Prostate gland (tissue), 2 donors: ENCODE measurements at regions of chr1 and their contacts with region 1.

Region 1: GRCh38 chr1:171081314-171081753 is 9.4 kb upstream of the FMO3 start:
- DNase-seq: no peak
- H3K4me3 ChIP-seq: no peak overlapping the region
- H3K27ac ChIP-seq: peak overlapping the region; percentile 29 to 51
- H3K4me1 ChIP-seq: no peaks in the 10 kb centered on the region
- H3K27me3 ChIP-seq: no peaks in the 10 kb centered on the region
- CTCF ChIP-seq: peak; percentile 29 to 75 (median 64)
- POLR2A ChIP-seq: no peak

Region 2: DNA sequence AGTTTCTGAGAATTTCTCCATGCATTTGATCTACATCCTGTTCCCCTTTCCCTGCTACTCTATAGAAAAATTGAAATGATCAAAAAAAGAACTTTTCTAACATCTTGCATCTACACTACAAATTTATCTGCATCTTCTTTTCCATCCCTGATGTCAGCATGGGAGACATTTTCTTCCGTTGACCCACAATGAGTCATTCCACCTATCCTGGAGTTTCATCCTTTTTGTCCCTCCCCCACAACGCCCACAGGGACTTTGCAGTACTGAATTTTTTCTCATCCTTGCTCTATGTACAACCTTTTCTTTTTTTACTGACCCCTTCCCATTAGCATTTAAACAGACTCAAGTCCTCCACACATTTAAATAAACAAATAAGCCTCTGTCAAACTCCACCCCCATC is 258.2 kb before region 1 on chr1:
- intact Hi-C with region 1: no loop called
- DNase-seq: no peak
- H3K4me3 ChIP-seq: no peak overlapping the region
- H3K27ac ChIP-seq: no peak overlapping the region
- H3K4me1 ChIP-seq: no peaks in the 10 kb centered on the region
- H3K27me3 ChIP-seq: no peaks in the 10 kb centered on the region
- CTCF ChIP-seq: no peak
- POLR2A ChIP-seq: no peak

Region 3: DNA sequence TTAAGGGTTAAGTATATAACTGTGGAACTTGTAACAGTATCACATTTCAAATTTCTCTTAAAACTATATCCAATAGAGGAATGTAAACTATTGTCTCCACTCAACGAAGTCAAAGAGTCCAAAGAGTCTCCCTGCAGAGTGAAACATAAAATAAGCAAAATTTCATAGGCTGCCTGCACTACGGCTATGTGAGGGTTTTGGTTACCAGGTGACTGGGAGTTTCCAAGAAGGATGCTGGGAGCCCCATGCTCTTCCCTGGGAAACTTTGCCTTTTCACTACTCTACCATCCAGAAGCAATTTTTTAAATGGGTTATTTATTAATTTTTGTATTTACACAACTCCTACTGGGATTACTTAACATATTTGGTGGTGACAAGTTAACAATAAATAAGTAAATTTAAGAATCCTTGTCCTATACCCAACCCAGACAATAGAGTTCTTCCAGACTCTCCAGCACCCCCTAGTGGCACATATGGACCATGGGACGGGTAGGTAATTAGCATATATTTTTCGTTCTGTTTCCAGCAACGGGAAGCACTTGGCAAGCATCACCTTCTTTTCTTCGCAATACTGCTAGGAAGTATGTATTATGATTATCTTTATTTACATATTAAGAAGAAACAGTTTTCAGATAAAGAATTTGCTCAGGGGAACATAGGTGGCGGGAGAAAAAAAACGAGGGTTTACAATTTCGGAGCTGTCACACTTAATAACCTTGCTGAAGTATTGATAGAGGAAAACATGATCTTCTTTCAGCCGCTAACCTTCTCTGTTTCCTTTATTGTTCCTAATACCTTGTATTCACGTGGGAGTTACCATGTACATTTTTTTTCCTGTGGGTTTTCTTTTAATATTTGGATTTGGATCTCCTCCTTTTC is 107.3 kb after region 1 on chr1:
- intact Hi-C with region 1: loop called (anchors 2 kb)
- DNase-seq: peak; percentile 23
- H3K4me3 ChIP-seq: no peak overlapping the region
- H3K27ac ChIP-seq: no peak overlapping the region
- H3K4me1 ChIP-seq: no peaks in the 10 kb centered on the region
- H3K27me3 ChIP-seq: no peaks in the 10 kb centered on the region
- CTCF ChIP-seq: peak in 3 of 4 experiments; percentile 42 to 69 (median 58)
- POLR2A ChIP-seq: no peak

Region 4: GRCh38 chr1:171226747-171227370 is 145.5 kb after region 1 on chr1:
- intact Hi-C with region 1: loop called (anchors 2 kb)
- DNase-seq: peak; percentile 60
- H3K4me3 ChIP-seq: no peak overlapping the region
- H3K27ac ChIP-seq: no peak overlapping the region
- H3K4me1 ChIP-seq: no peaks in the 10 kb centered on the region
- H3K27me3 ChIP-seq: no peaks in the 10 kb centered on the region
- CTCF ChIP-seq: peak; percentile 57 to 87 (median 83)
- POLR2A ChIP-seq: no peak

Region 5: GRCh38 chr1:171313835-171314320 is 232.5 kb after region 1 on chr1 and contains the start of gene FMO4:
- intact Hi-C with region 1: loop called (anchors 5 kb)
- DNase-seq: peak; percentile 95
- H3K4me3 ChIP-seq: peak within 1 kb of the TSS in 1 of 2 donors; percentile 8
- H3K27ac ChIP-seq: peak within 1 kb of the TSS; percentile 42 to 53
- H3K4me1 ChIP-seq: no peaks in the 10 kb centered on the region
- H3K27me3 ChIP-seq: no peaks in the 10 kb centered on the region
- CTCF ChIP-seq: peak; percentile 67 to 94 (median 91)
- POLR2A ChIP-seq: no peak
- total RNA-seq, gene FMO4: 6.7 to 7.1 TPM